Activated naive CD4-positive, alpha-beta T cell treated with anti-CD3 and anti-CD28 coated beads for 36 hours (primary cell): ENCODE measurements at regions of chr3 and their contacts with region 1.

Region 1: DNA sequence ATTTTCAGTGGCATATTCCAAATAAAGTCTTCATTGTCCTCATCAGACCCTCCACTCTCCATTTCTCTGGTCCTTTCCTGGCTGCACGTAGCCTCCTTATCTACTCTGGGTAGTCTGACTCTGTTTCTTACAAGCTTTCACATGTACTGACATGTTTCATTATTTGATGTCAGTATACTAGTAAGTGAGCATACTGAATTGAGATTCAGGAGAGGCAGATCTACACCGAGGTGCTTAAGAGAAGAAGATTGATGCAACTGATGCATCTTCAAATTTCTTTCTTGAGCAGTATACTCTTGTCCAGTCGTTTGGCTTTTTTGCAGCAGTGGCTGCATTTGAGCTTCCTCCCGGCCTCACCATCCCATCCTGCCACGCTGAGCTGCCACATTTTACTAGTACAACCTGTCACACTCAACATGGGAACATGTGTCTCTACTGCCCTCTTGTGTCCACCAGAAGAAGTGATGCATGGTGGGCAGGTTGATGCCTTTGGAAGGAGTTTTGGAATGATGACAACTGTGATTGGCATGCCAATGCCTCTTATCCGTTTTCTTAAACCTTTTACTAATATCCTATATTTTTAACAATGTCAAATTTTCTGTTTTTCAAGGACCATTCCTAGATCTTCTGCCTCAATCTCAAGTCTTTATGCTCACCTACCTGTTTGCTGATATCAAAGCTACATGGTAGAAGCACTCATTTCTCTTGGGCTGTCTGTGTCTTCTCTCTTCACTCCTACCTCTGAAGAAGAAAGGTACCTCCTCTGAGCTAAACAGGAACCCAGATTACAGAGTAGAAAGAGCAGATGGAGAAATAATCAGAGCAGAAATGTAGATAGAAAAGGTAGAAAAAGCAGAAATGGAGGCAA is 38.7 kb downstream of the GUCA1C start:
- DNase-seq: peak; percentile 81
- H3K4me3 Mint-ChIP-seq: peak overlapping the region; percentile 29
- H3K27ac Mint-ChIP-seq: peak overlapping the region; percentile 1
- H3K4me1 Mint-ChIP-seq: peaks cover 12% of the 10 kb centered on the region
- H3K27me3 Mint-ChIP-seq: no peaks in the 10 kb centered on the region

Region 2: GRCh38 chr3:108489771-108490170 is 425.2 kb before region 1 on chr3:
- CTCF ChIA-PET with region 1: interaction called, 10 read pairs
- intact Hi-C with region 1: loop called (anchors 1 kb)
- DNase-seq: peak; percentile 53
- H3K4me3 Mint-ChIP-seq: no peak overlapping the region
- H3K27ac Mint-ChIP-seq: no peak overlapping the region
- H3K4me1 Mint-ChIP-seq: peaks cover 2% of the 10 kb centered on the region
- H3K27me3 Mint-ChIP-seq: no peaks in the 10 kb centered on the region

Region 3: GRCh38 chr3:108662130-108662738 is 252.8 kb before region 1 on chr3:
- CTCF ChIA-PET with region 1: interaction called, 114 read pairs
- intact Hi-C with region 1: loop called (anchors 1 kb)
- DNase-seq: peak; percentile 63
- H3K4me3 Mint-ChIP-seq: no peak overlapping the region
- H3K27ac Mint-ChIP-seq: no peak overlapping the region
- H3K4me1 Mint-ChIP-seq: peaks cover 12% of the 10 kb centered on the region
- H3K27me3 Mint-ChIP-seq: no peaks in the 10 kb centered on the region

Region 4: DNA sequence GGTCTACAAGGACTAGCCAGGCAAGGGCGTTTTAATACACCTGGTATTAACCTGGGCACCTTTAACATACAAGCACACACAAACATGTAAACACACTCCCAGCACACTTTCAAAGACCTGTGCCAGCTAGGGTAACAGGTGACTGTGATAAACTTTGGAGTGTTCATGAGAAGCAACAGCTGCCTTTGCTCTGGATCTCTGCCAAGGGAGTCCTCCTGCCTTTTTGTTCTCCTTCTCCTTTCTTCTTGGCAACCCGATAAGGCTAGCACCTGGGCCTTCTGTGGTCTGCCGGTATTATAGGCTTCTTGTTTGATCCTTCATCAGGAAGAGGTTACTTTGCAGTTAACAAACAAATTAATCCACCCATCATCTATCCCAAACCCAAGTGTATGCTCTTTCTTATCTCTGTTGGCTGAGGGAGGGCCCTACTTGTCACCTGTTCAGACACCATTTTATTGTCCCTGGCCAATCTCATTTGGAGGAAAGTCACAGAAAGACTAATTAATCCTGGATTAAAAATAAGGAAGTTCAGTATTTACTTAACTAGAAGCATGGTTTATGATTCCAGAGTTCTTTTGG is 157.5 kb before region 1 on chr3 and contains the start of gene RETNLB:
- CTCF ChIA-PET with region 1: interaction called, 10 read pairs
- intact Hi-C with region 1: loop called (anchors 1 kb)
- DNase-seq: no peak
- H3K4me3 Mint-ChIP-seq: no peak within 1 kb of the TSS
- H3K27ac Mint-ChIP-seq: no peak within 1 kb of the TSS
- H3K4me1 Mint-ChIP-seq: peaks cover 5% of the 10 kb centered on the region
- H3K27me3 Mint-ChIP-seq: no peaks in the 10 kb centered on the region
- total RNA-seq, gene RETNLB: not detected

Region 5: DNA sequence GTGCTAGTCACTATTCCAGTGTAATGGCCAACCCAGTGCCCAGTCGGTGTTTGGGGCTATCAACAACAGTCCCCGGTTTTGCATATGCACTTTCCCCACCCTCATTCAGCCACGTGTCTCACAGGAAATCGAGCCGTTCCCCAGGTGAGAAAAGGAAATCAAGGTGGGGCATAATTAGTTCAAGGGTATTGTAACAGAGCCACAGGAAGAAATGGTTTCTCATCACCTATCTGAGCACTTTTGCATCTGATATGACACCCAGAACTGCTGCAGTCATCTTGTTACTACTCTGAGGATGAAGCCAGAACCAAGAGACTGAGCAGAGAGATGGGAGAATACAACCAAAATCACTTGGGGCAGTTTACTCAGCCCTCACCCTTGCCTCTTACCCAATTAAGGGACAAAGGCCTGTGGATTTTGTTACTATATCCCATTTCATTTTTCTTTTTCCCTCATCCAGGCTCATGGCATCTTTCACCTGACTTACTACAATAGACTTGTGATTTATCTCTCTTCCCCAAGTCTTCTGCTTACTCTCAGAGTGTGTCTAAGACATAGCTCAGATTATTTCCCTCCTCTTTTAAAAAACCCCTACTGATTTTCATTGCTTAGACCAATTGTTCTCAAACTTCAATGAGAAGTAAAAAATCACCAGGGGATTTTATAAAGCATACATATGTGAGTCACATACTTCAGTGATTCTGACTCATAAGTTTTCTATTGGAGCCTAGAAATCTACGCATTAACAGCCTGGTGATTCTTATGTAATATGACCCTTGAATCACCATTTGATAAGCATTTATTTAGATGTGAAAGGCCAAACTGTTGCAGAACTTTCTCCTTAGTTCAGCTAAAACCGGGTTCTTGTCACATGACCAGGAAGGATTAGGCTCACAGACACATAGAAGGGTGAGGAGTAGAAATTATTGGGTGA is 51.9 kb before region 1 on chr3:
- CTCF ChIA-PET with region 1: interaction called, 3 read pairs
- intact Hi-C with region 1: loop called (anchors 1 kb)
- DNase-seq: peak; percentile 79
- H3K4me3 Mint-ChIP-seq: peak overlapping the region; percentile 63
- H3K27ac Mint-ChIP-seq: peak overlapping the region; percentile 100
- H3K4me1 Mint-ChIP-seq: peaks cover 51% of the 10 kb centered on the region
- H3K27me3 Mint-ChIP-seq: no peaks in the 10 kb centered on the region

Region 6: DNA sequence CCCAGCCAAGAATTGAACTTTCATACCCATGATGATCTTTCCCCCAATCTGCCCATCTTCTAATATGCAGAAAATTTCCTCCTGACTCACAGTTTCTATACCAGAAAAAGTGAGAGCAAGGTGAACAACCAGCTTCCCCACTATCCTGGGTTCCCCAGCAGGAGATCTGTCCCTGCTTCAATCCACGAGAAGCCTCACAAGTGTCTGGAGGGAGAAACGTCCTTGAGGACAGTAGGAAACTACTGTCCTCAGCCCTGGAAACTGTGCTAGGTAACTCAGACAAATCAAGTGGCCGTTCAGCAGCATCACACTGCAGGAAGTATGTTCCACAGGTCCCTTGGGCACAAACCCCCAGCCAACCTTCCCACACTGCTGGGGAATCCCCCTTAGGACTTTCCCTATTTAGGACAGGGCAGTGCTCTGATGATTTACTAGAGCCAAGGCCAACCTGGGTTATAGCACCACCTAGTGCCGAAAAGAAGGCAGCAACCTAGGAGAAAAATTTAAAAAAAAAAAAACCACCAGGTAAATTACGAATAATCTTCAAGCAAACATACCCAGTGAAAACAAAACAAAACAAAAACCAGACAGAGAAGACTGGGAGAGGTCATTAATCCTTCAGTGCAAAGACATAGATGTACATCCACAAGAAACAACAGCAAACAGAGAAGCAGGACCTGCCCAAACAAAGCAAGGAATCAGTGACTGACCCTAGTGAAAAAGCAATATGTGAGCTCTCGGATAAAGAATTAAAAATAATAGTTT is 166.9 kb after region 1 on chr3:
- CTCF ChIA-PET with region 1: interaction called, 3 read pairs
- intact Hi-C with region 1: loop called (anchors 5 kb)
- DNase-seq: peak; percentile 38
- H3K4me3 Mint-ChIP-seq: no peak overlapping the region
- H3K27ac Mint-ChIP-seq: no peak overlapping the region
- H3K4me1 Mint-ChIP-seq: no peaks in the 10 kb centered on the region
- H3K27me3 Mint-ChIP-seq: peaks cover 6% of the 10 kb centered on the region